Activated CD8-positive, alpha-beta T cell treated with anti-CD3 and anti-CD28 coated beads, Interleukin-2, amount 10 ng/mL, durations not matched to agents 7 days and 5 days (primary cell): ENCODE measurements at regions of chr4 and their contacts with region 1.

Region 1: GRCh38 chr4:77358315-77358928 is 201.4 kb downstream of the CCNG2 start:
- DNase-seq: peak; percentile 23
- ATAC-seq: no peak
- H3K4me3 Mint-ChIP-seq: no peak overlapping the region
- H3K27ac Mint-ChIP-seq: no peak overlapping the region
- H3K4me1 Mint-ChIP-seq: no peaks in the 10 kb centered on the region
- H3K27me3 Mint-ChIP-seq: peaks cover 5% of the 10 kb centered on the region

Region 2: DNA sequence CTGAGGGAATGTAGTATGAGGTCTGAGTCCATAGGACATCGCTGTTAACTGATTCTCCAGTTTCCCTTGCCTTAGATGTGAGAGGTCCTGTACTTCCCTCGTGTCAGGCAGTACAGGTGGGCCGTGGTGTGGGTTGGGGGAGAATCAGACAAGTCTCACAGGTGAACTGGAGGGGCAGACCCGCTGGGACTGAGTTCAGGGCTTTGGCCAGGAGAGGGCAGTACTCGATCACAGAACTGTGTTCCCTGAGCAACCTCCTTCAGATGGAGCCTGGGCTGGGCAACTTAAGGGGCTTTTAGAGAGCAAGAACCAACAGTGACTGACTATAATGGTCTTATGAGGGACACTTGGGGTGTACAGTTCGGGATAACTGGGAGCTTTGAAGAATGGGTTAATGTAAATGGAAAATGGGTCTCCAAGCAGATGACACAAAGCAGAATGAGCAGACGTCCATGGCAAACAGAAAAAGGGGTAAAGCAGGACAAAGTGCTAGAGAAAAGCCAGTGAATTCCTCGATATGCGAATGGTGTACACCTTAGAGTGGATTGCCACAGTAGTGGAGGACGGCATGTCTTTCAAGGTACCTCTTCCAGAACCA is 117.9 kb before region 1 on chr4:
- CTCF ChIA-PET with region 1: interaction called, 32 read pairs
- POLR2A ChIA-PET with region 1: no interaction called
- DNase-seq: peak; percentile 70
- ATAC-seq: peak; percentile 77
- H3K4me3 Mint-ChIP-seq: no peak overlapping the region
- H3K27ac Mint-ChIP-seq: no peak overlapping the region
- H3K4me1 Mint-ChIP-seq: no peaks in the 10 kb centered on the region
- H3K27me3 Mint-ChIP-seq: peaks cover 7% of the 10 kb centered on the region

Region 3: DNA sequence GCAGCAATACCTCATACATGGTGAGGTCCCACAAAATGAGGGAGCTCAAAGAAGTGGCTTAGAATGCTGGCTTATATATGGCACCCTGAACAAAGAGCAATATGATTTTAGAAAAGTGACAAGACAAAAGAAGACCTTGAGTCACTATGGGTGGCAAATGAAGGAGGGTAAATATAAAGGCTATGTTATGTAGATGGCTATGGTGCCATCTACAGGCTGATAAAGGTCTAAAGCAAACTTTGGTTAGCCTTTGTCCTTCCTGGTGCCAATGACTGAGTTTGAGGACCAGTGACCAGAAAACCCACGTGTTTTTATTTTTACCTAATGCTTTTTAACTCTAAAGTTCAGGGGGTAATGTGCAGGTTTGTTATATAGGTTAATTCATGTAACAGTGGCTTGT is 49.6 kb before region 1 on chr4:
- CTCF ChIA-PET with region 1: no interaction called
- POLR2A ChIA-PET with region 1: no interaction called
- DNase-seq: no peak
- ATAC-seq: no peak
- H3K4me3 Mint-ChIP-seq: no peak overlapping the region
- H3K27ac Mint-ChIP-seq: no peak overlapping the region
- H3K4me1 Mint-ChIP-seq: no peaks in the 10 kb centered on the region
- H3K27me3 Mint-ChIP-seq: peaks cover 7% of the 10 kb centered on the region

Region 4: GRCh38 chr4:77347341-77347966 is 11.0 kb before region 1 on chr4:
- CTCF ChIA-PET with region 1: interaction called, 13 read pairs
- POLR2A ChIA-PET with region 1: no interaction called
- DNase-seq: no peak
- ATAC-seq: no peak
- H3K4me3 Mint-ChIP-seq: no peak overlapping the region
- H3K27ac Mint-ChIP-seq: no peak overlapping the region
- H3K4me1 Mint-ChIP-seq: no peaks in the 10 kb centered on the region
- H3K27me3 Mint-ChIP-seq: peaks cover 9% of the 10 kb centered on the region

Region 5: DNA sequence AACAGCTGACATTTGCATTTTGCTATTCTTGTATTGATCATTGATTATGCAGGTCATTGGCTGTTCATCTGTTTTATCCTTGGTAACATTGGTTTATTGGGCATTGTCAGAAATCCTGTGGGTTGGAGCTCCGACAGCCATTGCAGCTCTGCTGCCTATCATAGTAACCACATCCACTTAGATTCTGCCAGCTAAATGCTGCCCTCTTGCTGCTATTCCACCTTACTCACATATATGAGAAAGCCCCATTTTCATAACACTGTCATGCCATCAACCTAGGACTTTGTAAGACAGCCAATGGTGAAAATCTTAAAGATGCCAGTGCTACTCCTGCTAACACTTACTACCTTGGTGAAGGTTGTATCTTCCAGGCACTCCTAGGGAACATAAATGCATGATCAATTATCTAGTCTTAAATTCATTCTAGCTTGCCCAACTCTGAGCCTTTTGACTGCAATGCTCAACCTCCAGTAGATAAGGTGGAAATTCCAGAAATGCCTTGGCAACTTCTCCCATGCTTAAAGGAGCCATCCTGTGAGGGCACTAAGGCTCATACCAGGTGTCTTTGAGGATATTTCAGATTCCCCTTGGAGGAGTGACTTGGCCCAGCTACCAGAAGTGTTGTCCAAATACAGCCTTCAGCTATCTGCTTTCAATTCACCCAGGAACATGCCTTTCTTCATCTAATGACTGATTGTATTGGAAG is 60.1 kb after region 1 on chr4:
- CTCF ChIA-PET with region 1: interaction called, 10 read pairs
- POLR2A ChIA-PET with region 1: no interaction called
- DNase-seq: peak; percentile 25
- ATAC-seq: peak; percentile 51
- H3K4me3 Mint-ChIP-seq: no peak overlapping the region
- H3K27ac Mint-ChIP-seq: no peak overlapping the region
- H3K4me1 Mint-ChIP-seq: no peaks in the 10 kb centered on the region
- H3K27me3 Mint-ChIP-seq: peaks cover 18% of the 10 kb centered on the region

Region 6: DNA sequence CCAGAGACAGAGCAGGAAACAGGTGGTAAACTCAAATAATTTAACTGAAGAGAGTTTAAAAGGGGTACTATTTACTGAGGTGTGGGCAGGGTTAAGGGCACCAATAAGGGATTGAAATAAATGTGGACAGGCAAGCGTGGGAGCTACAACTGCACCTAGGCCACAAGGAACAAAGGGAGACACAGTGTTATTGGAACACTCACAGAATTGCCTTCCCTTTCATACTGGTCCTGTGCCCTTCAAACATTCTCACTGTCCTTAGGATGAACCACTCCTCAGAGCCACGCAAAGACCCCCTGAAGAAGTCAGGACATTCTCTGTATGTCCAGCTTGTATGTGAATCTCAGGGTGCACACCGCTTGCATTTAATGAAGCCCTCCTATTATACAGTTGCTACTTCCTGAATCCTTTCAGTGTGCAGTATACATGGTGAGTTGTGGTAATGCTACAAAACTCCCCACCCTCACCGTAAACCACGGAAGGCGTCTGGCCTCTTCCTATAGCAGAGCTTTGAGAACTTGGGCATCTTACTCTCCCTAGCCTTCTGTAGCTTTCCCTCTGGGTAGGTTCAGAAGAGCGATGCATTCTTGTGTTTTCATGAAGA is 494.6 kb after region 1 on chr4:
- CTCF ChIA-PET with region 1: no interaction called
- POLR2A ChIA-PET with region 1: no interaction called
- DNase-seq: peak; percentile 87
- ATAC-seq: peak; percentile 91
- H3K4me3 Mint-ChIP-seq: peak overlapping the region; percentile 67
- H3K27ac Mint-ChIP-seq: peak overlapping the region; percentile 93
- H3K4me1 Mint-ChIP-seq: peaks cover 63% of the 10 kb centered on the region
- H3K27me3 Mint-ChIP-seq: no peaks in the 10 kb centered on the region